HepG2 (cell line): ENCODE measurements at regions of chr4 and their contacts with region 1.

Region 1: GRCh38 chr4:177532358-177532757 is 90.1 kb upstream of the AGA start:
- DNase-seq: no peak
- ATAC-seq: no peak
- H3K4me3 ChIP-seq: no peak overlapping the region
- H3K27ac ChIP-seq: no peak overlapping the region
- H3K4me1 ChIP-seq: no peaks in the 10 kb centered on the region
- H3K27me3 ChIP-seq: no peaks in the 10 kb centered on the region
- CTCF ChIP-seq: no peak
- EP300 ChIP-seq: no peak
- POLR2A ChIP-seq: no peak
- RAD21 ChIP-seq: no peak

Region 2: GRCh38 chr4:176286728-176287127 is 1245.6 kb before region 1 on chr4:
- CTCF ChIA-PET with region 1: no interaction called
- POLR2A ChIA-PET with region 1: no interaction called
- in situ Hi-C with region 1: no loop called
- intact Hi-C with region 1: loop called (anchors 5 kb)
- DNase-seq: no peak
- ATAC-seq: no peak
- H3K4me3 ChIP-seq: no peak overlapping the region
- H3K27ac ChIP-seq: no peak overlapping the region
- H3K4me1 ChIP-seq: no peaks in the 10 kb centered on the region
- H3K27me3 ChIP-seq: no peaks in the 10 kb centered on the region
- CTCF ChIP-seq: no peak
- EP300 ChIP-seq: no peak
- POLR2A ChIP-seq: no peak
- RAD21 ChIP-seq: no peak

Region 3: DNA sequence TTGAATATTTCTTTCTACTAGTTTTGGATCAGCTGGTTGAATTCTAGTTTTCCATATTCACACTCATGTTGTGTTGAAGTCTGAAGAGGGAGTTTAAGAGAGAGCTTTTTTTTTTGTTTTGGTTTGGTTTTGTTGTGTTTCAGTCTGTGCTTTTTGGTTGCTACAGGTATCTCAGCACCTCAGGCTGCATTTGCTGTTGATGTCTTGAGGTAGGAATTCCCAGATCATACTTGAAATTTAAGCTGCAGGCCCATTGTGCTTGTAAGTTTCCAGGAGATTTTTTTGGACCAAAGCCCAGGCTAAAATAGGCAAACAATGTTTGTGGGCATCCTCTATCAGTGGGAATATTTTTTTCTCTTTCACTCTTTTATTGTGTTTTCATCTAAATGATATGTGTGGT is 100.1 kb after region 1 on chr4:
- CTCF ChIA-PET with region 1: no interaction called
- POLR2A ChIA-PET with region 1: no interaction called
- in situ Hi-C with region 1: no loop called
- intact Hi-C with region 1: no loop called
- DNase-seq: no peak
- ATAC-seq: no peak
- H3K4me3 ChIP-seq: no peak overlapping the region
- H3K27ac ChIP-seq: no peak overlapping the region
- H3K4me1 ChIP-seq: no peaks in the 10 kb centered on the region
- H3K27me3 ChIP-seq: no peaks in the 10 kb centered on the region
- CTCF ChIP-seq: no peak
- EP300 ChIP-seq: no peak
- POLR2A ChIP-seq: no peak
- RAD21 ChIP-seq: no peak

Region 4: GRCh38 chr4:177770776-177771175 is 238.4 kb after region 1 on chr4:
- CTCF ChIA-PET with region 1: no interaction called
- POLR2A ChIA-PET with region 1: no interaction called
- in situ Hi-C with region 1: no loop called
- intact Hi-C with region 1: no loop called
- DNase-seq: no peak
- ATAC-seq: no peak
- H3K4me3 ChIP-seq: no peak overlapping the region
- H3K27ac ChIP-seq: no peak overlapping the region
- H3K4me1 ChIP-seq: no peaks in the 10 kb centered on the region
- H3K27me3 ChIP-seq: no peaks in the 10 kb centered on the region; a peak in 1 of 5 replicates
- CTCF ChIP-seq: no peak
- EP300 ChIP-seq: no peak
- POLR2A ChIP-seq: no peak
- RAD21 ChIP-seq: no peak